ENCODE measurements at regions of chr15 and their contacts with region 1.

Region 1: DNA sequence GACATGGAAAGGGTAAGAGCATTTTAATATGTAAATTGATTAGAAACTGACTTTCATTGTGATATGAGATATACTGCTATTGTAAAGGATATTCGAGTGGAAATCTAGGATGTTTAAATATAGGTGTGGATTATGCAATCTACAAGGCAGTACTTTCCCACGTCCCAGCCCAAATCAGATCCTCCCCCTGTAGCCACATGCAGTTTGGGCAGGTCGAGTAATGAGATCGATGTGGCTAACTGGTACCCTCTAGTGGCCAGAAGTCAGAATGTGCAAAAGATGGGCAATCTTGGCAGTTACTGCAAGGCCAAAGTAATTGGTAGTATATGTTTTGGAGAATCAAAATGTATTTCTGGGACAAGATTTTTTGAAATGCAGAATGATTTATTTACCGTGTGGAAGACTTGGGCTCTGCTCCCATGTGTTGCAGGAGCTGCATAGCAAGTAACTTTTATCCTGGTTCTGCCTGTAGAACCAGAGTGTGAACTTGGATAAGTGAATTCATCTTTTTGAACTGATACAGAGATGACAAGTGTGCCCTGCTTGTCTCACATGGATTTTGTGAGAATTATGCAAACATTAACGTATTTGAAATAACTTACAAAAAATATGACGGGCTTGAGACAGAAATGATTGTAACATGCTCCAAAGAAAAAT is 94.5 kb upstream of the ADAMTSL3 start:
- DNase-seq: peak in 3 of 5 donors; percentile 25 to 37 (median 28)
- ATAC-seq: peak in 3 of 4 donors; percentile 57 to 69 (median 61)
- H3K4me3 ChIP-seq: no peak overlapping the region
- H3K27ac ChIP-seq: no peak overlapping the region
- H3K4me1 ChIP-seq: no peaks in the 10 kb centered on the region
- H3K27me3 ChIP-seq: peaks cover 0 to 5% (median 0%) of the 10 kb centered on the region in 9 donors
- CTCF ChIP-seq: peak; percentile 58 to 83 (median 74)
- POLR2A ChIP-seq: no peak

Region 2: DNA sequence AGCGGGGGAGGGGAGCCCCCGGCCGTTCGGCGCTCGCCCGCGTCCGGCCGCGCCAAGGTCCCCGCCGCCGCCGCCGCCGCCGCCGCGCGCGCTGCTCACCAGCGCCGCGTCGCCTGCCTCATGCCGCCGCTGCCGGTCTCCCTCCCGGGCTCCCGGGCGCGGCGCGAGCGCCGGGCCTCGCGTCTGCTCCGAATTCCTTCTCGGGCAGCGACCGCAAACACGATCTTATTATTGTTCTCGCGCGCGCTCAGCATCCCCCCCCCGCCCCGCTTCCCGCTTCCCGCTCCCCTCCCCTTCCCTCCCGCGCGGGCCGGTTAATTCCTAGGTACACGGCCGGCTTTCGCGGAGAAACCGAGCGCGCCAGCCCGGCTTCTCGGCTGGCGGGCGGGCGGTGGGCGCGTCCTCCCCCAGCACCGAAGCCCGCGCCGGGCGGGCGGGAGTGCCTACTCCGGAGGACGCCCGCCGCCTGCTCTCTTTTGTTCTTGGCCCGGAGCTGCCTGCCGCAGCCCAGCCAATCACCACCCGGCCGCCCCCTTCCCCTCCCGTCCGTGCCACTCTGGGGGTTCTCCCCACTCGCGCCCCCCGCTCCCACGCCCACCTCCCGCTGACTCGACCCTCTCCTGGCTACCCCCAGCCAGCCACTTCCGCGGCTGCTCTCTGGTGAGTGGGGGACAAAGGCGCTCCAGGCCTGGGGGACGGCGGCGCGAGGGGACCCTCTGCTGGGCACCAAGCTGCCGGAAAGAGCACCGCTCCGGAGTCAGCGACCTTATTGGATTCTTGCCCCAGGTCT is 351.6 kb before region 1 on chr15 and contains the start of gene HDGFL3:
- intact Hi-C with region 1: no loop called
- DNase-seq: peak; percentile 69 to 76 (median 75)
- ATAC-seq: peak; percentile 7 to 64 (median 50)
- H3K4me3 ChIP-seq: peak within 1 kb of the TSS; percentile 48 to 93 (median 82)
- H3K27ac ChIP-seq: peak within 1 kb of the TSS; percentile 84 to 95 (median 90)
- H3K4me1 ChIP-seq: peaks cover 0 to 35% (median 18%) of the 10 kb centered on the region in 12 donors
- H3K27me3 ChIP-seq: peaks cover 0 to 3% (median 0%) of the 10 kb centered on the region in 9 donors
- CTCF ChIP-seq: peak in 3 of 12 donors; percentile 12 to 26 (median 18)
- POLR2A ChIP-seq: peak in 1 of 2 donors; percentile 38
- total RNA-seq, gene HDGFL3: 26.4 to 50.7 (median 40.1) TPM

Region 3: DNA sequence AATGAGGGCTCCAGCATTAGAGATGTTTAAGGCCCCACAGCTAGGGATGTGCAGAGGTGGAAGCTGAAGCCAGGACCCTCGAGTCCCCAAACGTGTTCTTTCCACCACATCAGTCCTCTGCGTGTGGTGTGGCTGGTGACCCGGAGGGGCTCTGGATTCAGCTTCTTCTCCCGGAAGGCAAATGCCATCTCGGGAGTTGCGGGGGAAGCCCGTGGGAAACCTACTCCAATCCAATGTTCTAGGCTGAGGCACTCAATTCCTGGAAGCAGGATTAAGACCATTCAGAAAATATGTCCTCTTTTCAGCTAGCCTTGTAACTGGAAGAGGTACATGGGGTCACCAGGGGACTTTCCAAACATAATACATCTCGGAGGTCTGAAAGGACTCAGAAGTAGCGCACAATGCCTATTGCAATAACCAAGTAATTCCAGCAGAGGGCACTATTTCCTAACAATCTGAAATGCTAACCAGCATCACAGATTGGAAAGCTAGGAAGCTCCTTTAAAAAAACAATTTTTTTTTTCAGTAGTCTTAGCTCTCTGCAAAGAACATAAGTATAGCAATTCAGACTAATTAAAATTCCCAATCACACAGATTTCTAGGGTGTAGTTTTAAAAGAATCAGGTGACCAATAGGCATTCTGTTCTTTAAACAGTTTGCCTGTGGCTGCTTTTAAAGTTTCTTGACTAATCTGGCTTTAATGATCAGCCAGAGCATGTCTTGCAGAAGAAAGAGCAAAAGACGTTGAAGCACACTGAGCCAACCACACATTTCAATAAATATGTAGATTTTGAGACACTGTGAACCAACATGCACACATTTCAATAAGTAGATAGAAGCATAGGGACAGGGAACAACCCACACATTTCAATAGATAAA is 311.0 kb before region 1 on chr15:
- intact Hi-C with region 1: loop called (anchors 2 to 5 kb)
- DNase-seq: peak in 2 of 5 donors; percentile 11 to 19
- ATAC-seq: peak in 1 of 4 donors; percentile 54
- H3K4me3 ChIP-seq: no peak overlapping the region
- H3K27ac ChIP-seq: no peak overlapping the region
- H3K4me1 ChIP-seq: peaks cover 0 to 3% (median 0%) of the 10 kb centered on the region in 12 donors
- H3K27me3 ChIP-seq: peaks cover 7 to 38% (median 24%) of the 10 kb centered on the region in 9 donors
- CTCF ChIP-seq: peak; percentile 85 to 96 (median 94)
- POLR2A ChIP-seq: no peak

Region 4: GRCh38 chr15:83413054-83413719 is 146.3 kb before region 1 on chr15:
- intact Hi-C with region 1: no loop called
- DNase-seq: no peak
- ATAC-seq: no peak
- H3K4me3 ChIP-seq: no peak overlapping the region
- H3K27ac ChIP-seq: no peak overlapping the region
- H3K4me1 ChIP-seq: no peaks in the 10 kb centered on the region
- H3K27me3 ChIP-seq: peaks cover 0 to 14% (median 0%) of the 10 kb centered on the region in 9 donors
- CTCF ChIP-seq: no peak
- POLR2A ChIP-seq: no peak

Region 5: GRCh38 chr15:83436458-83437158 is 122.8 kb before region 1 on chr15:
- intact Hi-C with region 1: loop called (anchors 1 to 5 kb)
- DNase-seq: no peak
- ATAC-seq: peak in 2 of 4 donors; percentile 51 to 53
- H3K4me3 ChIP-seq: no peak overlapping the region
- H3K27ac ChIP-seq: no peak overlapping the region
- H3K4me1 ChIP-seq: no peaks in the 10 kb centered on the region
- H3K27me3 ChIP-seq: peaks cover 0 to 28% (median 6%) of the 10 kb centered on the region in 9 donors
- CTCF ChIP-seq: peak in 11 of 12 donors; percentile 24 to 47 (median 37)
- POLR2A ChIP-seq: no peak

Region 6: GRCh38 chr15:83443076-83443847 is 116.2 kb before region 1 on chr15:
- intact Hi-C with region 1: loop called in 9 of 10 experiments (anchors 1 to 5 kb)
- DNase-seq: no peak
- ATAC-seq: no peak
- H3K4me3 ChIP-seq: no peak overlapping the region
- H3K27ac ChIP-seq: no peak overlapping the region
- H3K4me1 ChIP-seq: peaks cover 0 to 16% (median 8%) of the 10 kb centered on the region in 12 donors
- H3K27me3 ChIP-seq: peaks cover 0 to 26% (median 9%) of the 10 kb centered on the region in 9 donors
- CTCF ChIP-seq: no peak
- POLR2A ChIP-seq: no peak

Region 7: GRCh38 chr15:83747050-83747717 is 187.7 kb after region 1 on chr15:
- intact Hi-C with region 1: loop called in 1 of 10 experiments (anchors 5 kb)
- DNase-seq: peak in 4 of 5 donors; percentile 28 to 44 (median 35)
- ATAC-seq: peak; percentile 59 to 89 (median 85)
- H3K4me3 ChIP-seq: peak overlapping the region in 8 of 12 donors; percentile 4 to 42 (median 16)
- H3K27ac ChIP-seq: peak overlapping the region in 11 of 12 donors; percentile 6 to 81 (median 54)
- H3K4me1 ChIP-seq: peaks cover 0 to 25% (median 10%) of the 10 kb centered on the region in 12 donors
- H3K27me3 ChIP-seq: no peaks in the 10 kb centered on the region
- CTCF ChIP-seq: peak; percentile 7 to 62 (median 40)
- POLR2A ChIP-seq: no peak

Region 8: GRCh38 chr15:84023636-84024035 is 464.2 kb after region 1 on chr15:
- intact Hi-C with region 1: loop called in 1 of 10 experiments (anchors 10 kb)
- DNase-seq: peak in 2 of 5 donors; percentile 11 to 47
- ATAC-seq: no peak
- H3K4me3 ChIP-seq: no peak overlapping the region
- H3K27ac ChIP-seq: no peak overlapping the region
- H3K4me1 ChIP-seq: no peaks in the 10 kb centered on the region
- H3K27me3 ChIP-seq: no peaks in the 10 kb centered on the region
- CTCF ChIP-seq: peak; percentile 38 to 67 (median 54)
- POLR2A ChIP-seq: no peak

Measured in heart left ventricle (tissue), 16 donors.